AG04449 (cell line): ENCODE measurements at regions of chr4 and their contacts with region 1.

Region 1: DNA sequence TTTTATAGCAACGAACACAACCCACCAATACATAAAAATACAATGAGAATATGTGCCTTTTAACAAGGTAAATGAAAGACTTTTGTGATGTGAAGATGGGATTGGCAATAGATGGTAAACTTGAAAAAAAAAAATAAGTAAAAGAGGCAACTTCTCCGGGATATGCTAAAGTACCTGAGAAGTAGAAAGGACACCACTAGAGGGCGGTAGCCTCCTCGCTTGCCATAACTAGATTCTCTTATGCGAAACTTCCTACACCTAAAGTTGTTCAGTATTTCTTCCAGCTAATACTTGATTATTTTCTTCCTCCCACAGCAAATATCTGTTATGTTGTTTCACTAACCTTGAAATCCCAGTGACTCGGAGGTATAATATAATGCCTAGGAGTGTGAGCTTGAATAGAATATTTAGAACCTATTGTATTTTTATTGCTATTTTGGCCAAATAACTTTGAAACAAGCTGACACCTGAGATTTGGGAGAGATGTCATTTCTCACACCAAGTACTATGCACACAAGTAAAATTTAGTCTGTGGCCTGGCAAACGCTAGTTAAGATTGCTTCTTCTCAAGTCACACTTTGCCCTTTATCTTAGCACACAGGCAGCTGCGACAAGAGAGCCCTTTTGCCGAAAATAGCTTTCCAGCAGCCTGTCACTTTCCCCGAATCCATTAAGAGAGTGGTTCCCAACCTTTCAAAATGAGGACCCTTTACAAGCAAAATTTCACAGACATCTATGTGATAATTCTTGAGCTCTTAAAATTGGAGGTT is 44.9 kb upstream of the PDLIM5 start:
- DNase-seq: no peak
- H3K4me3 ChIP-seq: no peak overlapping the region
- CTCF ChIP-seq: peak; percentile 76

Region 2: DNA sequence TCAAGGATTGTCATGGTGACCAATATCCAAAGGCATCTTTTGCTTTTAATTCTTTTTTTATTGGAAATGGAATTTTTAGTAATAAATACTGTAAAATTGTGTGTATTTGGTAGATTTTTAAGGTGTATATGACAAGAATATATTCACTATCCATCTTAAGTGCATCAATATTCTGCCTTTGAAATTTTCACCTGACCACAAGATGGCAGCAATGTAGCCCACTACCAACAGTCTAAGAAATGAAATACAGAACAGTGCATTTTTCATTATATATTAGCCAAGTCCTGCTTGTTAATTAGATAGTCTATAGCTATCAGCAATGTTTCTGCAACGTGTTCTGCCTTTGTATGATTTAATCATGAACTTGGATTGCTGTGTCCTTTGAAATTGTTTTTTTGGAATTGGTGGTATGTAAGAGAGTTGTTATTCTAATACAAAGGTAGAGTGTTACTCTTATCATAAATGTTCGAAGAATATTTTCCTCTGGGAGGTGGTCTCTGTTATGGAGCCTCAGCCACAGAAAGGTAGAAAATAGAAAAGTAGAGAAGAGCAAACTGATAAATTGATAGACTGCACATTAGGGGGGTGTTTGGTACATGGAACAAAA is 102.4 kb before region 1 on chr4:
- CTCF ChIA-PET with region 1: interaction called, 10 read pairs
- POLR2A ChIA-PET with region 1: no interaction called
- DNase-seq: no peak
- H3K4me3 ChIP-seq: no peak overlapping the region
- CTCF ChIP-seq: peak; percentile 52

Region 3: DNA sequence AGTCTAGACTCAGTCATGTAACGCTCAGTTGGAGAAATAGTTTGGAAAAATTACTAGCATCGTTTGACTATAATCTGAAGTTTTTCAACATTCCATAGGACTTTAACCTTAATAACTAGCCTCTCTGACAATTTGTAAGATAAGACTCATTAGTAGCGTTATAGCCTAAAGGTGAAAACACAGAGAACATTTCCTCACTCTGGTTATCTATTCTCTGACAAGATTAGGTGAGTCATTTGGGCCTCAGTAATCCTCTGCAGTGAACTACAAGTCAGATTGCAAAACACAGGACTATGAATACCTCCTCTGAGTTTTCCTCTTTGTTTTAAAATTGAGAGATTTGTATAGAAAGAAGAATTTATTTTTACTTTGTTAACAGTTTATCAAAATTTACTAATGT is 13.1 kb after region 1 on chr4:
- CTCF ChIA-PET with region 1: interaction called, 17 read pairs
- POLR2A ChIA-PET with region 1: no interaction called
- DNase-seq: no peak
- H3K4me3 ChIP-seq: no peak overlapping the region
- CTCF ChIP-seq: no peak

Region 4: GRCh38 chr4:94578195-94578594 is 171.3 kb after region 1 on chr4:
- CTCF ChIA-PET with region 1: interaction called, 19 read pairs
- POLR2A ChIA-PET with region 1: no interaction called
- DNase-seq: no peak
- H3K4me3 ChIP-seq: no peak overlapping the region
- CTCF ChIP-seq: no peak

Region 5: GRCh38 chr4:94595879-94596483 is 189.1 kb after region 1 on chr4:
- CTCF ChIA-PET with region 1: interaction called, 31 read pairs
- POLR2A ChIA-PET with region 1: no interaction called
- DNase-seq: no peak
- H3K4me3 ChIP-seq: no peak overlapping the region
- CTCF ChIP-seq: peak; percentile 22

Region 6: GRCh38 chr4:94621491-94622080 is 214.7 kb after region 1 on chr4:
- CTCF ChIA-PET with region 1: interaction called, 46 read pairs
- POLR2A ChIA-PET with region 1: no interaction called
- DNase-seq: no peak
- H3K4me3 ChIP-seq: no peak overlapping the region
- CTCF ChIP-seq: peak; percentile 52